ENCODE measurements at regions of chr5 and their contacts with region 1.

Region 1: DNA sequence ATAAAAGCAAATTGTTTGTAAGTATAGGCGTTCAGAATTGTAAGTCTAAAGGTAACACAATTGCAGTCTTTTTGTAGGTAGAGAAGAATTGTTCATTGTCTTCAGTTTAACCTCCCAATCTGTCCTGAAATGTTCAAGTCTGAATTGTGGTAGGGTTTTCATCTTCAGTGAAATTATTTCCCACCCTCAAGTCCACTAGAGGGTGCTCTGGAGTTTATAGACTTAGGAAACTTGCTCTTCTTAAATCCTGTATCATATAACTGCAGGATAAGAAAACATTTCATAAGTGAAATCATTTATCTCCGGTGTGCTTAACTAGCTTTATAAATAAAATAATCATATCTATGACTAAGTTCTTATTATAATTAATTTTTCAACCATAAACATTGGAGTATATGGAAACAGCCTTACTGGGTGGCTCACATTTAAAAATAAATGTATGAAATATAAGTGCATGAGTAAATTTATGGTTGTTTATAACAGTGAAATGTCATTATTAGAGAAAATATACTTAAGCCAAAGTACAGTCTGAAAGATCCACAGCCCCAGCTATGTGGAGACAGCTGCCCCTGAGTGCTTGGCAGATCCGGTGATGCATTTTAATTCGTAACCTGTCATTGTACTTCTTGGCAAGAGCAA is 182.4 kb upstream of the OTULINL start:
- DNase-seq: no peak
- H3K4me3 ChIP-seq: no peak overlapping the region
- CTCF ChIP-seq: peak; percentile 30

Region 2: GRCh38 chr5:14383923-14384322 is 15.2 kb before region 1 on chr5:
- CTCF ChIA-PET with region 1: interaction called, 15 read pairs
- POLR2A ChIA-PET with region 1: no interaction called
- DNase-seq: no peak
- H3K4me3 ChIP-seq: no peak overlapping the region
- CTCF ChIP-seq: no peak

Region 3: GRCh38 chr5:14469551-14470377 is 70.6 kb after region 1 on chr5:
- CTCF ChIA-PET with region 1: interaction called, 12 read pairs
- POLR2A ChIA-PET with region 1: no interaction called
- DNase-seq: no peak
- H3K4me3 ChIP-seq: no peak overlapping the region
- CTCF ChIP-seq: no peak

Region 4: GRCh38 chr5:14574891-14575496 is 175.8 kb after region 1 on chr5:
- CTCF ChIA-PET with region 1: no interaction called
- POLR2A ChIA-PET with region 1: no interaction called
- DNase-seq: no peak
- H3K4me3 ChIP-seq: no peak overlapping the region
- CTCF ChIP-seq: no peak

Region 5: GRCh38 chr5:14753912-14754311 is 354.7 kb after region 1 on chr5:
- CTCF ChIA-PET with region 1: no interaction called
- POLR2A ChIA-PET with region 1: no interaction called
- DNase-seq: no peak
- H3K4me3 ChIP-seq: no peak overlapping the region
- CTCF ChIP-seq: no peak

Region 6: DNA sequence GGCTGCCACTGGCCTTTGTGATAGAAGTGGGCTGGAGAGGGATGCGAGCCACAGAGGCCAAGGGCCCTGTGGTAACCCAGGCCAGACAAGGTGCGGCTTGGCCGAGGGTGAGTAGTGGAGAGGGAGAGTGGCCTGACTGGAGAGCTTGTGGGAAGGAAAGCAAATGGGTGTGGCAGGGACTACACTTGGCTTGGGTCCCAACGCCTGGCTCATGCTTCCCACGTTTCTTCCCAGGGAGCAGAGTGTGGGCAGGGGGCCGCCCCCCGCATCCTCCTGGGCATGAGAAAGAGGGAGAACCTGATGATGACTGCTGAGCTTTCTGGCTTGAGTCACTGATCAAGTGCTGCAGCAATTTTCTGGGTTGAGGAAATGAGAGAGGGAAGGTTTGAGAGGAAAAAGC is 376.7 kb after region 1 on chr5:
- CTCF ChIA-PET with region 1: no interaction called
- POLR2A ChIA-PET with region 1: no interaction called
- DNase-seq: no peak
- H3K4me3 ChIP-seq: no peak overlapping the region
- CTCF ChIP-seq: no peak

Measured in AG04449 (cell line).